IMR-90 (cell line): ENCODE measurements at regions of chr22 and their contacts with region 1.

Region 1: GRCh38 chr22:42188808-42189447 is 58.3 kb upstream of the CYP2D6 start:
- DNase-seq: peak; percentile 55
- ATAC-seq: peak; percentile 54
- H3K4me3 ChIP-seq: no peak overlapping the region
- H3K27ac ChIP-seq: no peak overlapping the region
- H3K4me1 ChIP-seq: peaks cover 9% of the 10 kb centered on the region
- H3K27me3 ChIP-seq: no peaks in the 10 kb centered on the region
- CTCF ChIP-seq: no peak
- POLR2A ChIP-seq: no peak
- RAD21 ChIP-seq: no peak

Region 2: DNA sequence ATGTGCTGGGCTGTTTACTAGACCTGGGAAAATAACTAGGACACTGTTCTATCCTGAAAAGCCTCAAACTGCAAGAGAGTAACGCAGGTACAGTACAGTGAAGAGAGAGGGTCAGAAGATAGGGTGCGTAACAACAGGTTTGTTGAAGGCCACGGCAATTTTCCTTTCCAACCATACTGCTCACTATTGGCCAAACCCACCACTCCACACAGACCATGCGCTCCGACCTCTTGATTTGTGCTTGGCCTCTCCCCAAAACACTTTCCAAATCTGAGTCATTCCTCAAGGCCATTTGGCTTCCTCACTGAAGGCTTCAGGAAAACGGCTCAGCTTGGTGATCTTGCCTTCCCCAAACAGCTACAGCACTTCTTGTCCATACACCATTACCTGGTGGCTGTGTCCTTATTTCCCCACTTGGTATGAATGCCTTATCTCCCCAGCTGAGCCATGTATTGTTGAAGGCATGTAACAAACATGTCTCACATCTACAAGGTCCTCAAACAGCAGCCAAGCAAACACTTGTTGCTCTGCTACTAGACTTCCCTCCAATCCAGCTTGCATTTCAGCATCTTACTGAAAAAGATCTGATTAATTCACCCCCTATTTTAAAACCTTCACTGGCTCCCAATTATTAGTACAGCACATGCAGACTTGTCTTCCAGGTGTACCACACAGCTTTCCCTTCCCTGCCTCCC is 40.7 kb after region 1 on chr22:
- CTCF ChIA-PET with region 1: no interaction called
- POLR2A ChIA-PET with region 1: no interaction called
- dilution Hi-C with region 1: no loop called
- in situ Hi-C with region 1: no loop called
- intact Hi-C with region 1: loop called (anchors 5 kb)
- DNase-seq: peak; percentile 54
- ATAC-seq: peak; percentile 63
- H3K4me3 ChIP-seq: no peak overlapping the region
- H3K27ac ChIP-seq: no peak overlapping the region
- H3K4me1 ChIP-seq: peaks cover 5% of the 10 kb centered on the region
- H3K27me3 ChIP-seq: no peaks in the 10 kb centered on the region
- CTCF ChIP-seq: no peak
- POLR2A ChIP-seq: no peak
- RAD21 ChIP-seq: no peak